Panc1 (cell line): ENCODE measurements at regions of chr1 and their contacts with region 1.

Region 1: DNA sequence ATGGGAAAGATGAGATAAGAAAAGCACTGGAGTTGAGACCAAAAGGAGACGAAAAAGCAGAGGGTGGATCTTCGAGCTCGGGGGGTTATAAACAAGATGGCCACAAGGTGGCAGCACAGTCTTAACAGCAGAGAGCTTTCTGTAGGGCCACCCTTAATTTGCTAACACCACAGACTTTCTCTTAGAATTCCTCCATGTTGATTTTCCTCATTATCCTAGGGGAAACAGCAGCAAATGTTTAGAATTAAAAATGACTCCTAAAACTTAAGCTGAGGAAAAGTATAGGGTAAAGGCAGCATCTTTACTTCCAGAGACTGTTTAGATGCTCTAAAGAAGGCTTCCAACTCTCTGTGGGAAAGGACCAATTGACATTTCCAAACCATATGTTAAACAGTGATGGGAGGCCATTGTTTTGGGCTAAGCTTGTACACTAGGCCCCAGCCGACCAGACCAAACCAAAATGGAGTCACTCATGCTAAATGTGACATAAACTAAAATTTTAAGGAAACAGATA is 2.5 kb upstream of the APOBEC4 start:
- DNase-seq: peak; percentile 60
- ATAC-seq: peak; percentile 95
- H3K4me3 ChIP-seq: no peak overlapping the region
- H3K27ac ChIP-seq: no peak overlapping the region
- H3K4me1 ChIP-seq: no peaks in the 10 kb centered on the region
- H3K27me3 ChIP-seq: no peaks in the 10 kb centered on the region
- CTCF ChIP-seq: peak; percentile 88

Region 2: GRCh38 chr1:183685112-183685713 is 29.6 kb after region 1 on chr1:
- CTCF ChIA-PET with region 1: interaction called, 12 read pairs
- POLR2A ChIA-PET with region 1: no interaction called
- in situ Hi-C with region 1: no loop called
- intact Hi-C with region 1: loop called (anchors 1 kb)
- DNase-seq: peak; percentile 24
- ATAC-seq: peak; percentile 63; the same call in 1 of the 2 replicates
- H3K4me3 ChIP-seq: no peak overlapping the region
- H3K27ac ChIP-seq: no peak overlapping the region
- H3K4me1 ChIP-seq: no peaks in the 10 kb centered on the region
- H3K27me3 ChIP-seq: no peaks in the 10 kb centered on the region
- CTCF ChIP-seq: peak; percentile 77; the same call in 1 of the 2 replicates

Region 3: DNA sequence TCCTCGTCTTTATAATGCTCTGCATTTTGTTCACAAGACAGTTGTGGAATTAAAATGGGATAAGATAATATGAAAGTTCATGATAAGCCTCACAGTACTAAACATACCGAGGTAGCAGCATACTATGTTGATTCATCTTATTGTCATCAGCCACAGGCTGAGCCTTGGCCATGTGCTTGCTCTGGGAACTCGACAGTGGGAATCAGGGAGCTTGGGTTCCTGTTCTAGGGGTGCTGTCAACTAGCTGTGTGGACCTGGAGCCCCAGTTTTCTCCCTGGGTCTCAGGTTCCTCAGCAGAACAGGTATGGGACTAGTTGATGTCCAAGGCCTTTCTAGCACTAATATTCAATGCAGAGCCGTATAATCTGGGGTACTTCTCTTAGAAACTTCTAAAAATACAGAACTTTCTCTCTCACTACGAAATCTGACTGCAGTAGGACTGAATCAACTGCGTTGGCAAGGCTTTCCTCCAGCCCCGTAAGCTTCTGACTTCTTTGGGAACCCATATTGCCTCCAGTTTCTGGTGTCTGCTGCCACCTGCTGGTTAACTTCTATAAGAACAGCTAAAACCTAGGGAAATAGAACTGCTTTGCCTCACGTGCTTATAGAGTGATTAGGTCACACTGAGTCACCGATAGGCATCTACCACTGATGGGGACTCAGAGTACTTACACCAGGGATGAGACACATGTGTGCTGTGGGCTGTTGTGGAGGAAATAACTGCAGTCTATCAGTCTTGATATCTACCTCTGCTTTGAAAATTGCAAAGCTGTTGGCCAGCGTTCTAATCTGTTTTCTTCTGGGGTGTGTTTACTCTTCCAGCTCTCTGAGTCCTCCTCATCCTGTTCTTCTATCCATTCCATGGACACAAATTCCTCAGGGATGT is 260.2 kb after region 1 on chr1:
- CTCF ChIA-PET with region 1: interaction called, 27 read pairs
- POLR2A ChIA-PET with region 1: no interaction called
- in situ Hi-C with region 1: no loop called
- intact Hi-C with region 1: loop called (anchors 1 kb)
- DNase-seq: peak; percentile 96
- ATAC-seq: peak; percentile 98
- H3K4me3 ChIP-seq: no peak overlapping the region
- H3K27ac ChIP-seq: no peak overlapping the region
- H3K4me1 ChIP-seq: 0 out of 2 replicates have a peak, but pooled peaks cover 6% of the 10 kb centered on the region
- H3K27me3 ChIP-seq: no peaks in the 10 kb centered on the region
- CTCF ChIP-seq: peak; percentile 86